ENCODE measurements at regions of chr6 and their contacts with region 1.

Region 1: DNA sequence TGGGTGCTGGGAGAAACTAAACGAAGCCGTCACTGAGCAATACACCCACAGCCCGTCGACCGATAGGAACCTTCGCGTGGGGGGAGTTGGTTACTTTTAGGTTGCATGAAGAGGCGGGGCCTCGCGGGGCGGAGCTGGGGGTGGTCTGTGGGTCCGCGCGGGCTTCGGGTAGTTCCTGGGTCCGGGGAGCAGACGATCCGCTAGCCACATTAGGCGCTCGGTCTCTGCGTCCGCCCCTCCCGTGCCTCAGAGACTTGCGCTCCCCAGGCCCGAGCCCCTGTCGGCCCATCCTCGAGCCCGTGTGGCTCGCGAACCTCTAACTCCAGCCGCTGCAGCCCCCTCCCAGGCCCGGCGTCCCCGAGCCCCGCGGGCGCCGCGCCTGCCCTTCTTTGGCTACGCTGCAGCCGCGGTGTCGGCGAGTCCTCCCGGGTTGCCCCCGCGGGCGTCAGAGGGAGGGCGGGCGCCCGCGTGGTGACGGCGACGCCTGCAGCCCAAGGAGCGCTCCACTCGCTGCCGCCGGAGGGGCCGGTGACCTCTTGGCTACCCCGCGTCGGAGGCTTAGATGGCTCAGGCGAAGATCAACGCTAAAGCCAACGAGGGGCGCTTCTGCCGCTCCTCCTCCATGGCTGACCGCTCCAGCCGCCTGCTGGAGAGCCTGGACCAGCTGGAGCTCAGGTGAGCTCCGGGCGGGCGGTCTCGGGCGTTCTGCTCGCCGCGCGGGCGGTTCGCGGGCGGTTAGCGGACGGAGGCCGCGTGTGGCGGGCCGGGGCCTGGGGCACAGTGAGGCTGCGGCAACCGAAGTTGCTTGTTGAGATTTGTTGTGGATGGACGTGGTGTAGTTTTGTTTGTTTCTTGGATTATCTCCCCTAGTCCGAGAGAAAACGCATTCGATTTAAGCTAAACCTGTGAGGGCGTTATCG is at the start of gene BAG2:
- DNase-seq: peak; percentile 93 to 95
- H3K4me3 ChIP-seq: peak within 1 kb of the TSS; percentile 68 to 92
- H3K27ac ChIP-seq: peak within 1 kb of the TSS; percentile 90 to 92
- H3K4me1 ChIP-seq: peaks cover 0 to 31% (median 25%) of the 10 kb centered on the region in 4 donors
- H3K27me3 ChIP-seq: no peaks in the 10 kb centered on the region
- CTCF ChIP-seq: peak; percentile 27 to 35

Region 2: GRCh38 chr6:56902641-56903464 is 269.5 kb before region 1 on chr6:
- intact Hi-C with region 1: no loop called
- DNase-seq: no peak
- H3K4me3 ChIP-seq: no peak overlapping the region
- H3K27ac ChIP-seq: no peak overlapping the region
- H3K4me1 ChIP-seq: peaks cover 0 to 7% (median 0%) of the 10 kb centered on the region in 4 donors
- H3K27me3 ChIP-seq: no peaks in the 10 kb centered on the region
- CTCF ChIP-seq: peak; percentile 54 to 74

Region 3: DNA sequence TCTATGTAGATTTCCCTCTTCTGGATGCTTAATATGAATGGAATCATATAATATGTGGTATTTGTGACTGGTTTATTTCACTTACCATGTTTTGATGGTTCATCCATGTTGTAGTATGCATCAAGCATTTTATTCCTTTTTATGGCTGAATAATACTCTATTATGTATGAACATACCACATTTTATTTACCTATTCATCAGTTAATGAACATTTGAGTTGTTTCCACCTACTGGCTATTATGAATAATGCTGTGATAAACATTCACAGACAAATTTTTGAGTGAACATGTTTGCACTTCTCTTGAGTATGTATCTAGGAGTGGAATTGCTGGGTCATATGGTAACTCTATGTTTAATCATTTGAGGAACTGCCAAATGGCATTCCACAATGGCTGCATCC is 97.3 kb before region 1 on chr6:
- intact Hi-C with region 1: no loop called
- DNase-seq: no peak
- H3K4me3 ChIP-seq: no peak overlapping the region
- H3K27ac ChIP-seq: no peak overlapping the region
- H3K4me1 ChIP-seq: no peaks in the 10 kb centered on the region
- H3K27me3 ChIP-seq: no peaks in the 10 kb centered on the region
- CTCF ChIP-seq: no peak

Region 4: DNA sequence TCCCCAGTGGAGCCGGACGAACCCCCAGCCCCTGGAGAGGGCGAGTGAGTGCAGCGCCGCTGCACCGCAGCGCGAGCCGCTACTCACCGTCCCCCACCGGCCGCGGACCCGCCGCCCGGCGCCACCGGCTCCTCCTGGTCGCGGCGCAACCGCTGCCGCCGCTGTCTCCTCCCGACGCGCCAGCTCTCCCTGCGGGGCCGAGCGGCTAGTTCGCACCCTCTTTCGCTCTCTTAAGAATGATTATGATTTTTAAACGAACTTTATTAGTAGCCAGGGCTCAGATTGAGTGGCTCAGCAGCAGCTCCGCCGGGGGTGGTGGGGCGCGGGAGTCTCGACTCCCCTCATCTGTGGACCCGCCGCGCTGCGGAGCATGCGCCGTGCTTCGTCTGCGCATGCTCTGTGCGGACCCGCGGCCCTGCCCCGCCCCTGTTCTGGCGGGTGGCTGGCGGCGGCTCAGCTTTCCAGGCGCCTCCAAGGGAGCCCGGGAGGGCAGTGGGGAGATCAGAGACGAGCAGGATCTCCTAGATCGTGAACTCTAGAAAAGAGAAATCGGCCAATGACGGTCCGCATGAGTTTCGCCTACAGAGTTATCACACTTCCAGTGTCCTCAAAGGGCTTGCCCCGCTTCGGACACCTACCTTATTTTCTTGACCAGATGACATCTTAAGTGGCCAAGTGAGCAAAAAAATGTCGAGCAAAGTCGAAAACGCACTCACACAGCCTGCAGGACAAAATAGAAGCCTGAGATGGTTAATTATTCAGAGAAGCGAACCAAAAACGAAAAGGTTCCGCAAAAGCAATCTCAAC is 49.7 kb after region 1 on chr6 and contains the start of gene RAB23:
- intact Hi-C with region 1: loop called (anchors 5 kb)
- DNase-seq: peak; percentile 79 to 93
- H3K4me3 ChIP-seq: peak within 1 kb of the TSS; percentile 93 to 99
- H3K27ac ChIP-seq: peak within 1 kb of the TSS; percentile 96 to 97
- H3K4me1 ChIP-seq: peaks cover 0 to 48% (median 5%) of the 10 kb centered on the region in 4 donors
- H3K27me3 ChIP-seq: no peaks in the 10 kb centered on the region
- CTCF ChIP-seq: peak in 1 of 2 experiments; percentile 11

Region 5: DNA sequence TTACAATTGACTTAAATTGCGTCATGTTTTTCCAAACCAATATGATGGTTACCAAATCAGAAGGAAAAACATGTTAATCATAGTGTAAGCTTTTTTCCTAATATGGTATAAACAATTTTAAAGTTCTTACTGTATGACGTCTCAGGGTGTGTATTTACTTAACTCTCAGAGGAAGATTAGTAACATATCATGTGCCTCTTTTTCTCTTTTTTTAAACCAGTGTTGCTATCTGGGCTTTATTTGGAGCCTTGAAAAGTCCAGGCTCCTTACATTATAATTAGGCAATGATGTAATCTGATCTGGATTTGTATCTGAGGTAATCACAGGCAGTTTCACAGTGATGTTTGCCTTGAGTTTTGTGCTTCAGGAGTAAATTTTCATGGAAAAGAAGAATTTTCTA is 70.1 kb after region 1 on chr6:
- intact Hi-C with region 1: no loop called
- DNase-seq: no peak
- H3K4me3 ChIP-seq: no peak overlapping the region
- H3K27ac ChIP-seq: peak overlapping the region; percentile 65 to 79
- H3K4me1 ChIP-seq: peaks cover 0 to 26% (median 3%) of the 10 kb centered on the region in 4 donors
- H3K27me3 ChIP-seq: no peaks in the 10 kb centered on the region
- CTCF ChIP-seq: no peak

Region 6: DNA sequence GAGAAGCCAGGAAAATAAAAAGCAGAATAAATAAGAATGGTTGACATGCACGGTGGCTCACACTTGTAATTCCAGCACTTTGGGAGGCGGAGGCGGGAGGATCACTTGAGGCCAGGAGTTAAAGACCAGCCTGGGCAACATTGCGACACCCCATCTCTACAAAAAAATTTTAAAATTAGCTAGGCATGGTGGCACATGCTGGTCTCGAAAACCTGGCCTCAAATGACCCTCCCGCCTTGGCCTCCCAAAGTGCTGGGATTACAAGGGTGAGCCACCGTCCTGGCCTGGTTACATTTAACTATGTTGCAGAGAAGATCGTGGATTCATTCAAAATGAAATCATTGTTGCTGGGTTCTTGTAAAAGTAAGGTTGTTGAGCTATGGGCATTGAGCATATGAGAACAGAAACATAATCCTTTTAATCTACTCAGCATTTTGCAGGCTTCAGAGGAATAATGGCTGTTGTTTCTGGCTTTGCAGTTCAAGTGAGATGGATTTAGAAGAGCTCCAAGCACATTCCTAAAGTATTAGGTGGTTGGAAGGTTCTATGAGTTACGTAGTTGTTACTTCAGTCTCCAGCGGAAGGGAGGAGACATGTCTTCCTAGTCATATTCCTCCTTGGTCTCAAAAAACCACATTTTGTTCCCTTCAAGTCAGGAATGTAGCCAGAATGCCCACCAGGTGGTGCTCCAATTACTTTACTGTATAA is 95.3 kb after region 1 on chr6:
- intact Hi-C with region 1: loop called (anchors 10 kb)
- DNase-seq: peak in 1 of 2 donors; percentile 54
- H3K4me3 ChIP-seq: no peak overlapping the region
- H3K27ac ChIP-seq: peak overlapping the region; percentile 41 to 52
- H3K4me1 ChIP-seq: peaks cover 0 to 53% (median 16%) of the 10 kb centered on the region in 4 donors
- H3K27me3 ChIP-seq: no peaks in the 10 kb centered on the region
- CTCF ChIP-seq: peak; percentile 34 to 59

Measured in tibial artery (tissue), 4 donors.